ENCODE measurements at regions of chr9 and their contacts with region 1.

Region 1: GRCh38 chr9:112310826-112311225 is 22.6 kb downstream of the PTBP3 start:
- DNase-seq: no peak
- ATAC-seq: no peak
- H3K4me3 ChIP-seq: no peak overlapping the region
- H3K27ac ChIP-seq: no peak overlapping the region
- H3K4me1 ChIP-seq: no peaks in the 10 kb centered on the region
- H3K27me3 ChIP-seq: no peaks in the 10 kb centered on the region
- CTCF ChIP-seq: no peak
- POLR2A ChIP-seq: no peak
- RAD21 ChIP-seq: no peak

Region 2: DNA sequence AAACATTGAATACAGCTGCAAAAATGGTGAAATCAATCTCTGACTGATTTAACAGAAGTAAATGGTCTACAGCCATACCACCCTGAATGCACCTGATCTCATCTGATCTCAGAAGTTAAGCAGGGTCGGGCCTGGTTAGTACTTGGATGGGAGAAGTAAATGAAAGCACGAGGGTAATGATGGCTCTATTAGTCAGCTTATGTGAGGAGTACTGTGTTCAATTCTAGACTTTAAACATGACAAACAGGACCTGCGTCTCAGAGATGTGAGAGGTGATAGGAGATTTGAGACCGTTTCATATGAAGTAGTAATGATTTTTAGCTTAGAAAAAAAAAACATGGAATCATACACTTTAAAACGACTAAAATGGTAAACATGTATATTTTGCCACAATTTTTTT is 58.6 kb before region 1 on chr9:
- CTCF ChIA-PET with region 1: interaction called, 3 read pairs
- POLR2A ChIA-PET with region 1: no interaction called
- dilution Hi-C with region 1: no loop called
- in situ Hi-C with region 1: no loop called
- intact Hi-C with region 1: loop called (anchors 5 kb)
- DNase-seq: no peak
- ATAC-seq: no peak
- H3K4me3 ChIP-seq: no peak overlapping the region
- H3K27ac ChIP-seq: no peak overlapping the region
- H3K4me1 ChIP-seq: peaks cover 3% of the 10 kb centered on the region; the same call in 1 of the 2 replicates
- H3K27me3 ChIP-seq: no peaks in the 10 kb centered on the region
- CTCF ChIP-seq: no peak
- POLR2A ChIP-seq: no peak
- RAD21 ChIP-seq: no peak

Region 3: DNA sequence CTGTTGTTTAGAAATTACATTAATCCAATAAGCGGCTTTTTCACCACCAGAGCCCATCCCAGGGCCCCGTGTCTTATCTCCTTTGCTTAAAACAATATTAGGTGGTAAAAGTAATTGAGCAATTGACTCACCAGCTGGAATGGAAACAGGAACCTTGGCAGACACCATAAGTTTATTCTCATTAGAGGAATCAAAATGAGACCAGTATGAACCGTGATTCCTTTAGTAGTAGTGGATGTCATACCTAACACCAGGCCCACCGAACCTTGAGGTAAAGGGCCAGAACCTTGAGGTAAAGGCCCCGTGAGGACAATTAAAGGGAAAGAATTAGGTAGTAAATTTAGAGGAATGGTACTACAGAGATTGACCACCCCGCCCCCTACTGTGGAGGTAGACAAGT is 85.6 kb after region 1 on chr9:
- CTCF ChIA-PET with region 1: no interaction called
- POLR2A ChIA-PET with region 1: no interaction called
- dilution Hi-C with region 1: no loop called
- in situ Hi-C with region 1: no loop called
- intact Hi-C with region 1: no loop called
- DNase-seq: no peak
- ATAC-seq: no peak
- H3K4me3 ChIP-seq: no peak overlapping the region
- H3K27ac ChIP-seq: no peak overlapping the region
- H3K4me1 ChIP-seq: no peaks in the 10 kb centered on the region
- H3K27me3 ChIP-seq: no peaks in the 10 kb centered on the region
- CTCF ChIP-seq: no peak
- POLR2A ChIP-seq: no peak
- RAD21 ChIP-seq: no peak

Region 4: DNA sequence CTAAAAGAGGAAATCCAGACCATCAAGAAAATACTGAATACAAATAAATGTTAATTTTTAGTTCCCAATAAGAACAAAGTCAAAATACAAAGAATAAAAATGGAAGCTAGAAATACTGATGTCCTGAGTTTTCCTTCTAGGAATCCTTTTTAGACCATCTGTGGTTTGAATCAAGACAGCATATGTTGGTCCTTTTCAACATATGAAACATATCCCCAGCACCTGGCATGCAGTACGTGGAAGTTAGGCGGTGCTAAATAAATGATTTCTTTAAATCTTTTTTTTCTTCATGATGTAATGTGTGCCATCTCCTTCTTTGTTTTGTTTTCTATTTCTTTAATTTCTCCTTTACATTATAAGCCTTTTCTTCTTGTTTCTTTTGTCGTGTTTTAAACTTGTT is 209.8 kb after region 1 on chr9:
- CTCF ChIA-PET with region 1: no interaction called
- POLR2A ChIA-PET with region 1: no interaction called
- dilution Hi-C with region 1: no loop called
- in situ Hi-C with region 1: no loop called
- intact Hi-C with region 1: no loop called
- DNase-seq: no peak
- ATAC-seq: no peak
- H3K4me3 ChIP-seq: no peak overlapping the region
- H3K27ac ChIP-seq: no peak overlapping the region
- H3K4me1 ChIP-seq: no peaks in the 10 kb centered on the region
- H3K27me3 ChIP-seq: no peaks in the 10 kb centered on the region
- CTCF ChIP-seq: no peak
- POLR2A ChIP-seq: no peak
- RAD21 ChIP-seq: no peak

Region 5: DNA sequence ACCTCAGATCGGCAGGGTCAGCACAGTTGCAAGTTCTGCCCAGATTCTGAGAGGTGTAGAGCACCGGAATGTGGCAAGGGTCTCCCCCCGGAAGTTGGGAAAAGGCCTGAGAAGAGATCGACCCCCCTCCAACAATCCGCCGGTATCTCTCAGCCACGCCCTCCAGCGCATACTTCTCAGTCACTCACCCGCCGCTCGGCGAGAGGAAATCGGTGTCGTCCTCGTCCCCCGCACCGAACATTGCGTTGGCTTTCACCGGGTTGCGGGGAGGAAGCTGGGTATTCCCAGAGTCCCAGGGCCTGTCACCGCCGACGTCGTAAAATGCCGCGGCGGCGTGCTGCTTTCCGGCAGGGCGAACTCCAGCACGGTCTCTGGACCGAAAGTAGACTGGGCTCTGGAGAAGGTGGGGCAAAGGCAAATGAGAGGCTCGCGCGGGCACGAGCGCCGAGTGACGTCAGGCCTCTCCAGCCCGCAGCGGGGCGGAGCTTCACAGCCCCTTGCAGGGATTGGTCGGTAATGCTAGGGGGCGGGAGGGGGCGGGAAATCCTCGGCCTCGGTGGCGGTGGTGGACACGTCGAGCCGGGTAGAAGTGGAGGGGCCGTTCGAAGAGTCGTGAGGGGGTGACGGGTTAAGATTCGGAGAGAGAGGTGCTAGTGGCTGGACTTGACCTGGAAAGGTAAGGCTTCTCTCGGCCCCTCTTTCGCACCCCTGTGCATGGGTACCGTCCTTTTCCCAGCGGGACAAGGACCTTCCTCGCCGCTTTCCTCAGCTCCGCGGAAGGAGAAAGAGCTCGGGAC is 910.4 kb after region 1 on chr9 and contains the starts of genes FKBP15 and SLC31A1:
- CTCF ChIA-PET with region 1: no interaction called
- POLR2A ChIA-PET with region 1: no interaction called
- dilution Hi-C with region 1: no loop called
- in situ Hi-C with region 1: no loop called
- intact Hi-C with region 1: no loop called
- DNase-seq: peak; percentile 99
- ATAC-seq: peak; percentile 97
- H3K4me3 ChIP-seq: peak within 1 kb of the TSS; percentile 86
- H3K27ac ChIP-seq: peak within 1 kb of the TSS; percentile 95
- H3K4me1 ChIP-seq: peaks cover 10% of the 10 kb centered on the region
- H3K27me3 ChIP-seq: no peaks in the 10 kb centered on the region
- CTCF ChIP-seq: no peak
- POLR2A ChIP-seq: peak; percentile 95
- RAD21 ChIP-seq: no peak
- total RNA-seq, gene FKBP15: 25.5 and 25.6 TPM in 2 replicates
- total RNA-seq, gene SLC31A1: 23.3 and 27.5 TPM in 2 replicates